ENCODE measurements at regions of chr12 and their contacts with region 1.

Region 1: GRCh38 chr12:56041552-56042429 is at the start of gene RPS26:
- DNase-seq: peak; percentile 90
- H3K4me3 Mint-ChIP-seq: peak within 1 kb of the TSS; percentile 97
- H3K27ac Mint-ChIP-seq: peak within 1 kb of the TSS; percentile 97
- H3K4me1 Mint-ChIP-seq: peaks cover 49% of the 10 kb centered on the region
- H3K27me3 Mint-ChIP-seq: no peaks in the 10 kb centered on the region
- total RNA-seq, gene RPS26: 35.4 and 38.2 TPM in 2 replicates

Region 2: GRCh38 chr12:55817346-55818139 is 224.2 kb before region 1 on chr12 and contains the starts of genes ORMDL2 and SARNP:
- intact Hi-C with region 1: loop called (anchors 1 kb)
- DNase-seq: peak; percentile 97
- H3K4me3 Mint-ChIP-seq: no peak within 1 kb of the TSS
- H3K27ac Mint-ChIP-seq: no peak within 1 kb of the TSS
- H3K4me1 Mint-ChIP-seq: peaks cover 33% of the 10 kb centered on the region
- H3K27me3 Mint-ChIP-seq: no peaks in the 10 kb centered on the region
- total RNA-seq, gene ORMDL2: 58.9 and 61.2 TPM in 2 replicates
- total RNA-seq, gene SARNP: 70.7 and 75.1 TPM in 2 replicates

Region 3: GRCh38 chr12:55973598-55974307 is 68.0 kb before region 1 on chr12 and contains the start of gene RAB5B:
- intact Hi-C with region 1: loop called (anchors 1 kb)
- DNase-seq: peak; percentile 98
- H3K4me3 Mint-ChIP-seq: no peak within 1 kb of the TSS
- H3K27ac Mint-ChIP-seq: no peak within 1 kb of the TSS
- H3K4me1 Mint-ChIP-seq: peaks cover 20% of the 10 kb centered on the region
- H3K27me3 Mint-ChIP-seq: no peaks in the 10 kb centered on the region
- total RNA-seq, gene RAB5B: 42.6 and 47.0 TPM in 2 replicates

Region 4: GRCh38 chr12:56007564-56008559 is 33.9 kb before region 1 on chr12:
- intact Hi-C with region 1: loop called (anchors 1 kb)
- DNase-seq: peak; percentile 55
- H3K4me3 Mint-ChIP-seq: peak overlapping the region; percentile 92
- H3K27ac Mint-ChIP-seq: peak overlapping the region; percentile 88
- H3K4me1 Mint-ChIP-seq: peaks cover 32% of the 10 kb centered on the region
- H3K27me3 Mint-ChIP-seq: peaks cover 3% of the 10 kb centered on the region

Region 5: DNA sequence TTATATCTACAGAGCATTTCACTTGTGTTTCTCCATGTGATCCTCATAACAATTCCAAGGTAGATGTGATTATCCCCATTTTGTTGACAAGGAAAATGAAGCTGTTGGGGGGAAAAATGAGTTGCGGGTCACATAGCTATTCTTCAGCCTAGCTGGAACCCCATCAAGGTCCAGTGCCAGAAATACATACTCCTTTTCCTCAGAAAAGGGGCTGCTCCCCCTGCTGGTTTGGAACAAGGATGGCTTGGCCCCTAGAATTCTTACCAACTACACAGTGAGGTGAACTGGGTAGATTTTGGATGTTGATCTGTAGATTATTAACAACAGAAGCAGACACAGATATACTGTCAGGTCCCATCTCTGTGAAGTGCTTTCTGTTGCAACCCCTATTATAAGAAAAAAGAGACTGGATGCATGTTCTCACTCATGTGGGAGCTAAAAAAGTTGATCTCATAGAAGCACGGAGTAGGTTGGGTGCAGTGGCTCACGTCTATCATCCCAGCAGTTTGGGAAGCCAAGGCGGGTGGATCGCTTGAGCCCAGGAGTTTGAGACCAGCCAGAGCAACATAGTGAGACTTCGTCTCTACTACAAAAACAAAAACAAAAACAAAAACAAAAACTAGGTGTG is 12.0 kb before region 1 on chr12:
- intact Hi-C with region 1: loop called (anchors 1 kb)
- DNase-seq: no peak
- H3K4me3 Mint-ChIP-seq: no peak overlapping the region
- H3K27ac Mint-ChIP-seq: peak overlapping the region; percentile 25
- H3K4me1 Mint-ChIP-seq: peaks cover 51% of the 10 kb centered on the region
- H3K27me3 Mint-ChIP-seq: no peaks in the 10 kb centered on the region

Region 6: DNA sequence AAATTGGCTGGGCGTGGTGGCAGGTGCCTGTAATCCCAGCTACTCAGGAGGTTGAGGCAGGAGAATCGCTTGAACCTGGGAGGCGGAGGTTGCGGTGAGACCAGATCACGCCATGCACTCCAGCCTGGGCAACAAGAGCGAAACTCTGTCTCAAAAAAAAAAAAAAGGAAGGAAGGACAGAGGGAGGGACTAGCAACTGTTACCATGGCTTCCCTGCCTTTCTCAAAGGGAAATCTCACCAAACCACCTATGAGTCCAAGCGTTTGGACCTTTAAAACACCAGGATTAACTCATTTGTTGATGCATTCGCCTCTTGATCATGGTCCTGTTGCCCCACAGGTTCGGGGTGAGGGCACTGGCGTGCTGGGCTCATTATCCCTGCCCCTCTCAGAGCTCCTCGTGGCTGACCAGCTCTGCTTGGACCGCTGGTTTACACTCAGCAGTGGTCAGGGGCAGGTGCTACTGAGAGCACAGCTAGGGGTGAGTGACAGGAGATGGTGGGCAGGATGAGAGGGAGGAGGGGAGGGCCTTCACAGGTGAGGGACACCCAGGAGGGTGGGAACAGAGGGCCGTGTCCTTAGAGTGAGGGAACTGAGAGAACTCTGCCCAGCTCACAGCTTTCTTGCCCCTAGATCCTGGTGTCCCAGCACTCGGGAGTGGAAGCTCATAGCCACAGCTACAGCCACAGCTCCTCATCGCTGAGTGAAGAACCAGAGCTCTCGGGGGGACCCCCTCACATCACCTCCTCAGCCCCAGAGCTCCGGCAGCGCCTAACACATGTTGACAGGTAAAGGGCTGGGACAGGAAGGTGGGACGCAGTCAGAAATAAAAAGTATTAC is 100.4 kb after region 1 on chr12:
- intact Hi-C with region 1: no loop called
- DNase-seq: no peak
- H3K4me3 Mint-ChIP-seq: no peak overlapping the region
- H3K27ac Mint-ChIP-seq: peak overlapping the region; percentile 5
- H3K4me1 Mint-ChIP-seq: peaks cover 34% of the 10 kb centered on the region
- H3K27me3 Mint-ChIP-seq: no peaks in the 10 kb centered on the region

Region 7: GRCh38 chr12:56152318-56153033 is 110.7 kb after region 1 on chr12 and contains the start of gene MYL6B:
- intact Hi-C with region 1: loop called (anchors 2 kb)
- DNase-seq: peak; percentile 92
- H3K4me3 Mint-ChIP-seq: peak within 1 kb of the TSS; percentile 88
- H3K27ac Mint-ChIP-seq: peak within 1 kb of the TSS; percentile 99
- H3K4me1 Mint-ChIP-seq: peaks cover 39% of the 10 kb centered on the region
- H3K27me3 Mint-ChIP-seq: no peaks in the 10 kb centered on the region
- total RNA-seq, gene MYL6B: 58.8 and 67.6 TPM in 2 replicates

Region 8: GRCh38 chr12:56189176-56189917 is 147.6 kb after region 1 on chr12 and contains the start of gene SMARCC2:
- intact Hi-C with region 1: loop called (anchors 10 kb)
- DNase-seq: peak; percentile 85
- H3K4me3 Mint-ChIP-seq: peak within 1 kb of the TSS; percentile 95
- H3K27ac Mint-ChIP-seq: peak within 1 kb of the TSS; percentile 96
- H3K4me1 Mint-ChIP-seq: peaks cover 55% of the 10 kb centered on the region
- H3K27me3 Mint-ChIP-seq: peaks cover 2% of the 10 kb centered on the region
- total RNA-seq, gene SMARCC2: 124 and 132 TPM in 2 replicates

Region 9: DNA sequence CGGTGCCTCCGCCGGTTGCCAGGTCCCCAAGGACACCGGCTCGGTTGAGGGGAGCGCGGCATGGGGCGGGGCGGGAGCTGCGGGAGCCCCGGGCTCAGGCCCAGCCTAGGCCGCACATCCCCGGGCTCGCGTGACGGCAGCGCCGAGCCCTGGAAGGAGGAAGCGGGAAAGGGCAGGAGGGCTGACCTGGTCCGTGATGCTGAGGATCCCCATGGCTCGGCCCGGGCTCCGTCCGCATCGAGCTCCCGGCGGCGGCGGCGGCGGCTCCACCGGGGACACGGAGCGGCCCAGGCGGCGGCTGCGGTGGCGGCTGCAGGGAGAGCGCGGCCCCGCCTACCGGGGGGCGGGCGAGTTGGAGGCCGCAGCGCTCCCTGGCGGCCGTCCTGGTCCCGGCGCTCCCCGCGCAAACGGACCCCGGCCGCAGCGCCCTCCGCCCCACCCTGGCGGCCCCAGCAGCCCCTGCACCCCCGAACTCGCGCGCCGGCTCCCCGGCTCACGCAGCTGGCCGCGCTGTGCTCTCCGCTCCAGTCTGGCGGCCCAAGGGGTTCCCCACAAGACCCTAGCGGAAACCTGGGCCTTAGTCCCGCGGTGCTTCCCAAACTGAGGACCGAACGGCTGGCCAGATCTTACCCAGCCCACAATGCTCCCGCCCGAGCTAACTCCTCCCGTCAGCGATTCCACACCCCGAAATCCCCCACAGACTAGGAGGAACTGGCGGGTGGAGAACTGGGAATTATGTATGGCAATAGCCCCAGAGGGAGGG is 216.4 kb after region 1 on chr12 and contains the start of gene ANKRD52:
- intact Hi-C with region 1: no loop called
- DNase-seq: peak; percentile 82
- H3K4me3 Mint-ChIP-seq: peak within 1 kb of the TSS; percentile 90
- H3K27ac Mint-ChIP-seq: peak within 1 kb of the TSS; percentile 83
- H3K4me1 Mint-ChIP-seq: peaks cover 22% of the 10 kb centered on the region
- H3K27me3 Mint-ChIP-seq: no peaks in the 10 kb centered on the region
- total RNA-seq, gene ANKRD52: 71.0 and 83.9 TPM in 2 replicates

Measured in activated T-helper 1 cell treated with anti-CD3 and anti-CD28 coated beads, Interleukin-12 subunit alpha, Interleukin-12 subunit beta, Interleukin-2, Interleukin-4 antibody, amounts not matched to agents 30 ng/mL and 10 ng/mL and 1 ng/mL, durations not matched to agents 14 hours and 24 hours and 36 hours (primary cell).